Ascending aorta (tissue), 2 donors: ENCODE measurements at regions of chr16 and their contacts with region 1.

Region 1: GRCh38 chr16:77236063-77236511 is 36.9 kb downstream of the SYCE1L start:
- DNase-seq: peak in 1 of 2 donors; percentile 87
- H3K4me3 ChIP-seq: peak overlapping the region; percentile 10 to 27
- H3K27ac ChIP-seq: no peak overlapping the region
- H3K4me1 ChIP-seq: no peaks in the 10 kb centered on the region
- H3K27me3 ChIP-seq: no peaks in the 10 kb centered on the region
- CTCF ChIP-seq: peak; percentile 98 to 99 (median 98)

Region 2: GRCh38 chr16:77183137-77183536 is 53.0 kb before region 1 on chr16:
- intact Hi-C with region 1: no loop called
- DNase-seq: no peak
- H3K4me3 ChIP-seq: no peak overlapping the region
- H3K27ac ChIP-seq: no peak overlapping the region
- H3K4me1 ChIP-seq: no peaks in the 10 kb centered on the region
- H3K27me3 ChIP-seq: no peaks in the 10 kb centered on the region
- CTCF ChIP-seq: no peak

Region 3: DNA sequence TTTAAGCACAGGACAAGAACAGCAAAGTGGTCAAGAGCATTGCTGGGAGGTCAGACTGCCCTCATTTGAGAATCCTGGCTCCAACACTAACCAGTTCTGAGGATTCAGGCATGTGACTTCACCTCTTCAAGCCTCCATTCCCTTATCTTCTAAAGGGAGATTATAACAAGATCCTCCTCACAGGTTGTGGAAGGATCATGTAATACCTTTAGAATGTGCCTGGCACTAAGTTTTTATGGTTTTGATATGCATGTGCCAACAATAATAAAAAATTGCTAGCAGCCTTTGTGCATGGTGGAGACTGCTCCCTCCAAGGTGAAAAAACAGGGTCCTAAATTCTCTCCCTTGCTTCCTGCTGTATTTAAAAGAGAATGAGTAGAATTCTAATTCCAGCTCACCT is 234.8 kb after region 1 on chr16:
- intact Hi-C with region 1: no loop called
- DNase-seq: no peak
- H3K4me3 ChIP-seq: no peak overlapping the region
- H3K27ac ChIP-seq: no peak overlapping the region
- H3K4me1 ChIP-seq: no peaks in the 10 kb centered on the region
- H3K27me3 ChIP-seq: no peaks in the 10 kb centered on the region
- CTCF ChIP-seq: no peak

Region 4: DNA sequence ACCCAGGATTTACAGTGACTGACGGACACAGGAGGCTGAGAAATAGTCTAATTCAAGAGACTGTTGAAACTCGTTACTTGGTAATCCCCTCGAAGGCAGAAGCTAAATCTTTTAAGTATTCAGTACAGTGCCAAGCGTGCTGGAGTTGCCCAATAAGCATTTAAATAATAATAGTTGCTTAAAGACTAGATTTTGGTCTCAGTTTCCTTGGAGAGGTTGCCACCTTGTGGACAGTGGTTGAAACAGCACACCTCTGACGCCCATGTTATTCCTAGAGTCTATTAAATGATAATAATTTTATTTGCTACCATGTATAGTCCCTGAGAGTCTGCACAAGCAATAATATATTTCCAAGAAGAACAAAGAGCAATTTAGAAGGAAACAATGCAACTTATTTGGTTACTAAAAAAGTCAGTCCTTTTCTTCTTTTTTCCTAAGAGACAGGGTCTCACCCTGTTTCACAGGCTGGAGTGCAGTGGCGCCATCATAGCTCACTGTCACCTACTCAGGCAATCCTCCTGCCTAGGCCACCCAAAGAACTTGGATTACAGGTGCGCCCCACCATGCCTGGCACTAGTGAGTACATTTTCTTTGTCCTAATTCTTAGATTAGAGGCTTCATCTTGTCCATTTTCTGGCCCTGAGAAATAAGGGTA is 348.2 kb after region 1 on chr16:
- intact Hi-C with region 1: loop called (anchors 1 kb)
- DNase-seq: no peak
- H3K4me3 ChIP-seq: no peak overlapping the region
- H3K27ac ChIP-seq: no peak overlapping the region
- H3K4me1 ChIP-seq: no peaks in the 10 kb centered on the region
- H3K27me3 ChIP-seq: no peaks in the 10 kb centered on the region
- CTCF ChIP-seq: peak; percentile 42 to 78 (median 63)

Region 5: DNA sequence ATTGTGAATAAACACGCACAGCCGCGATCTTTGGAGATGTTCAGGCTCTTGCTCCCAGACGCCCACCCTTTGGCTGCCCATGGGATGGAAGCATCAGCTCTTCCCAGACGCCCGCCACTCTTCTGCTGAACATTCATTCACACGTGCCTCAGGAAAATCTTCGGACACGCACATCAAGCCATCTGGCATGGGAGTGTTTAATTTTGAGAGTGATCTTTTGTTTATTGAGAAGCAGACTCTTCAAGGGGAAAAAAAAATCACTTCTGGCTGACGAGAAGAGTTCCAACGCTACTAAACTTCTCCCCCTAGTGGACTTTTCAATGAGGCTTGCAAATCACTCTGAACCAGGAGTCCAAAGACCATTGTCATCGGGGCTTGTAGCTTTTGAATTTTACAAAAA is 424.2 kb after region 1 on chr16:
- intact Hi-C with region 1: loop called (anchors 1 kb)
- DNase-seq: no peak
- H3K4me3 ChIP-seq: peak overlapping the region in 1 of 2 donors; percentile 40
- H3K27ac ChIP-seq: no peak overlapping the region
- H3K4me1 ChIP-seq: no peaks in the 10 kb centered on the region
- H3K27me3 ChIP-seq: no peaks in the 10 kb centered on the region
- CTCF ChIP-seq: peak; percentile 31 to 78 (median 49)

Region 6: GRCh38 chr16:78235168-78235800 is 999.2 kb after region 1 on chr16:
- intact Hi-C with region 1: loop called (anchors 10 kb)
- DNase-seq: peak; percentile 21 to 79
- H3K4me3 ChIP-seq: no peak overlapping the region
- H3K27ac ChIP-seq: no peak overlapping the region
- H3K4me1 ChIP-seq: no peaks in the 10 kb centered on the region
- H3K27me3 ChIP-seq: no peaks in the 10 kb centered on the region
- CTCF ChIP-seq: peak; percentile 69 to 87 (median 86)

Region 7: DNA sequence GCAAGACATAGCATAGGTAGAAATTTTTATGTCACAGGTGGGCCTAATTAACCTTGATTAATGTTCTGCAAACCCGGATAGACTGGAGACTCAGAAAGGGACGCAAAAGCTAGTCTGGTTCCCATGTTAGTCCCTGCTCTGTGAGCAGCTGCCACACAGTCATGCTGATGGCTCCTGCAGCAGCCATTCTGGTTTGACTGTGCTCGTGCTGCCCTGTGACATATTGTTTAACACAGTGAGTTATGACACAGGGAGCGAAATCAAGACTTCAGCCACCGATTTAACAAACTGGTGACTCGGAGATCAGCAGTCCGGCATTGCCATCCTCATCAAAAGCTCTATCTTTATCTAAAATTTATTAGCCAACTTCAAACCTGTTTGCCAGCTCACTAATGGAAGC is 1033.2 kb after region 1 on chr16:
- intact Hi-C with region 1: no loop called
- DNase-seq: no peak
- H3K4me3 ChIP-seq: no peak overlapping the region
- H3K27ac ChIP-seq: no peak overlapping the region
- H3K4me1 ChIP-seq: no peaks in the 10 kb centered on the region
- H3K27me3 ChIP-seq: no peaks in the 10 kb centered on the region
- CTCF ChIP-seq: no peak